Naive thymus-derived CD4-positive, alpha-beta T cell (primary cell): ENCODE measurements at regions of chr5 and their contacts with region 1.

Region 1: GRCh38 chr5:43484106-43484849 is 613 bp upstream of the TMEM267 start:
- DNase-seq: peak; percentile 69 to 91 (median 88)
- ATAC-seq: peak; percentile 83
- H3K4me3 ChIP-seq: peak overlapping the region; percentile 72
- H3K4me3 Mint-ChIP-seq: peak overlapping the region; percentile 95 to 100 (median 98)
- H3K27ac ChIP-seq: peak overlapping the region; percentile 92
- H3K27ac Mint-ChIP-seq: peak overlapping the region; percentile 97 to 100 (median 100)
- H3K4me1 ChIP-seq: peaks cover 20 to 28% of the 10 kb centered on the region in 2 donors
- H3K4me1 Mint-ChIP-seq: peaks cover 23 to 69% (median 60%) of the 10 kb centered on the region in 7 donors
- H3K27me3 ChIP-seq: no peaks in the 10 kb centered on the region
- H3K27me3 Mint-ChIP-seq: no peaks in the 10 kb centered on the region

Region 2: DNA sequence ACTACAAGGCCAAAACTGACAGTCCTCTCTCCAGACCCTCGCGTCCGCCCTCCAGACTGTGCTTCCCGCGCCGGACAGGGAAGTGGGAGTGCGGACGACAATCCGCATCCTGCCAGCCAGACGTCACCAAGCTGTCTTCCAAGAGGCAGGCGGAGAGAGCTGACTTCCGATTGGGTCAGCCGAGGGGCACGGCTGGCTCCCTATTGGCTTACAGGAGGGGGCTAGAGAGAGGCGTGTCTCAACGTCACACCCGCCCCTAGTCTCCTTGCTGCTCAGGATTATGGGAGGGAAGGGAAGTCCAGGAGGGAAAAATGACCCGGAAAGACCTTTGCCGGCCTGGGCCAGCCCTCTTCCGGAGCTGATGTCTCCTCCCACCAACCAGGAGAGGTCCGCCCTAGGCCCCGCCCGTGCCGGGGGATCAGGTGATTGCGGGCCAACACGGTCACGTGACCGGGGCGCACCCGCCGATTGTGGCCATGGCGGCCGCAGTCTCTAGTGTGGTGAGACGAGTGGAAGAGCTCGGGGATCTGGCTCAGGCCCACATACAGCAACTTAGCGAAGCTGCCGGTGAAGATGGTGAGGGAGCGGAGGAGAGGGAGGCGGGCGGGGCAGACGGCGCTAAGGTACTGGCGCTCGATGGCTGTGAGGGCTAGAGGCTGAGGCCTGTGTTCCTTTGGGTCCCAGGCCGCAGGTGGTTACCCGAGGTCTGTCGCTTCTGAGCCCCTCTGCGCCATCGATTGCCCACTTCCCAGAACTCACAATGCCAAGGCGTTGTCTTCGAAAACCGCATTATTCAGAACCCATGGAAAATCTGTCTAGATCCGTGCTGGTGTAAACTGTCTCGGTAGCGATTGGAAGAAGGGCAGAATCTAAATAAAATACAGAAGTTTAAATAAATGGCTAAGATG is 1580.1 kb before region 1 on chr5 and contains the start of gene RIMOC1:
- CTCF ChIA-PET with region 1: no interaction called
- POLR2A ChIA-PET with region 1: interaction called, 14 read pairs
- intact Hi-C with region 1: loop called in 1 of 2 experiments (anchors 1 kb)
- DNase-seq: peak; percentile 94 to 98 (median 97)
- ATAC-seq: peak; percentile 94
- H3K4me3 ChIP-seq: peak within 1 kb of the TSS; percentile 90
- H3K4me3 Mint-ChIP-seq: peak within 1 kb of the TSS; percentile 84 to 99 (median 98)
- H3K27ac ChIP-seq: peak within 1 kb of the TSS; percentile 85
- H3K27ac Mint-ChIP-seq: peak within 1 kb of the TSS; percentile 97 to 100 (median 99)
- H3K4me1 ChIP-seq: peaks cover 16 to 18% of the 10 kb centered on the region in 2 donors
- H3K4me1 Mint-ChIP-seq: peaks cover 21 to 54% (median 46%) of the 10 kb centered on the region in 7 donors
- H3K27me3 ChIP-seq: no peaks in the 10 kb centered on the region
- H3K27me3 Mint-ChIP-seq: peaks cover 0 to 11% (median 0%) of the 10 kb centered on the region in 5 donors
- total RNA-seq, gene RIMOC1: 13.8 to 40.6 (median 27.5) TPM

Region 3: GRCh38 chr5:42994246-42995151 is 489.8 kb before region 1 on chr5:
- CTCF ChIA-PET with region 1: interaction called, 4 read pairs
- POLR2A ChIA-PET with region 1: interaction called, 67 read pairs
- intact Hi-C with region 1: loop called in 1 of 2 experiments (anchors 2 kb)
- DNase-seq: peak; percentile 73 to 89 (median 85)
- ATAC-seq: peak; percentile 73
- H3K4me3 ChIP-seq: peak overlapping the region; percentile 84
- H3K4me3 Mint-ChIP-seq: peak overlapping the region; percentile 84 to 100 (median 98)
- H3K27ac ChIP-seq: peak overlapping the region; percentile 89
- H3K27ac Mint-ChIP-seq: peak overlapping the region; percentile 97 to 100 (median 100)
- H3K4me1 ChIP-seq: peaks cover 18 to 21% of the 10 kb centered on the region in 2 donors
- H3K4me1 Mint-ChIP-seq: peaks cover 16 to 49% (median 29%) of the 10 kb centered on the region in 7 donors
- H3K27me3 ChIP-seq: no peaks in the 10 kb centered on the region
- H3K27me3 Mint-ChIP-seq: peaks cover 0 to under 1% (median 0%) of the 10 kb centered on the region in 5 donors

Region 4: DNA sequence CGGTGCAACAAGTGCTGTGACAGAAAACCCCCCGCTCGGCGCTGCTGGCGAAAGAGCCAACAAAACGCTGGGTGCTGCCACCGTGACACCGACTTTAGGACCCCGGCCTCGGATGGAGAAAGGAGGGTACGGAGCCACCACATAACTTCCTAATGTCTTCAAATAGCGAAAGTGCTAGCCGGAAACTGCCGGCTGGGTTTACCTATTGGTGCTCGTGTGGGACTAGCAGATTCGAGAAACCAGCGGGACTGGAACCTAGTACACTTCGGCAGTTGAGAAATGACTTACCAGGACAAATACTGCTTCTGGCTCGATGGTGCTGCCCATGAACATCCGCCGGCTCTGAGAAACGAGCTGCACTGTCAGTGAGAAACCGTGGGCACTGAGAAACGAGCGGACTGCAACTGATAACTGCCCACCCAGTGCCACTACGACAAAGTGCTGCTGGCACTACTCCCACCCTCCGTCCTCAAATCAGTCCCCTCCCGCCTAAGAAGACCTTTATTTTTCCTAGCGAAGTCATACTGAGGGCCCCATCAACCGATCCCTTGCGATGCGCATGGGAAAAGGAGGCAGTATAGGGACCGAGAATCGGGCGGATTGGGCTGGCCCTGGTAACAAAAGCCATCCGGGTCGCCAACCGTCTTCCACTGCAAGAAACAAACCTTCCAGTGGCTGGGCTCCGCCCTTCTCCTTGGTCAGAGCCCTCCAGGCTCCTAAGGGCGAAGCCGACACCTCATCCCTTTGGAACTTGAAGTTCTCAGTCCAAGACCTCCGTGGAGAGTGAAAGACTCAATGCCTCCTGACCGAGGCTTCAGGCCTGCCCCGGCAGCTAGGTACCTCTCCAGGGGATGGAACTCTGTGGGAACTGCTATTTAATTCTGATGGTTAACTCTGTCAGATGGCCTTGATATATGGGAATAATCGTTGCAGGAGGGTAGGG is 417.2 kb before region 1 on chr5:
- CTCF ChIA-PET with region 1: no interaction called
- POLR2A ChIA-PET with region 1: interaction called, 93 read pairs
- intact Hi-C with region 1: loop called (anchors 1 kb)
- DNase-seq: peak; percentile 80 to 96 (median 89)
- ATAC-seq: peak; percentile 69
- H3K4me3 ChIP-seq: peak overlapping the region; percentile 82
- H3K4me3 Mint-ChIP-seq: peak overlapping the region; percentile 93 to 100 (median 98)
- H3K27ac ChIP-seq: peak overlapping the region; percentile 90
- H3K27ac Mint-ChIP-seq: peak overlapping the region; percentile 99 to 100 (median 99)
- H3K4me1 ChIP-seq: peaks cover 25 to 33% of the 10 kb centered on the region in 2 donors
- H3K4me1 Mint-ChIP-seq: peaks cover 26 to 67% (median 44%) of the 10 kb centered on the region in 7 donors
- H3K27me3 ChIP-seq: no peaks in the 10 kb centered on the region
- H3K27me3 Mint-ChIP-seq: no peaks in the 10 kb centered on the region

Region 5: GRCh38 chr5:43313035-43313853 is 171.0 kb before region 1 on chr5 and contains the start of gene HMGCS1:
- CTCF ChIA-PET with region 1: interaction called, 5 read pairs
- POLR2A ChIA-PET with region 1: interaction called, 82 read pairs
- intact Hi-C with region 1: loop called (anchors 1 kb)
- DNase-seq: peak; percentile 94 to 99 (median 99)
- ATAC-seq: peak; percentile 93
- H3K4me3 ChIP-seq: peak within 1 kb of the TSS; percentile 89
- H3K4me3 Mint-ChIP-seq: peak within 1 kb of the TSS; percentile 82 to 99 (median 94)
- H3K27ac ChIP-seq: peak within 1 kb of the TSS; percentile 95
- H3K27ac Mint-ChIP-seq: peak within 1 kb of the TSS; percentile 81 to 98 (median 94)
- H3K4me1 ChIP-seq: peaks cover 9 to 12% of the 10 kb centered on the region in 2 donors
- H3K4me1 Mint-ChIP-seq: peaks cover 19 to 63% (median 39%) of the 10 kb centered on the region in 7 donors
- H3K27me3 ChIP-seq: no peaks in the 10 kb centered on the region
- H3K27me3 Mint-ChIP-seq: peaks cover 0 to 2% (median 0%) of the 10 kb centered on the region in 5 donors
- total RNA-seq, gene HMGCS1: 32.2 to 77.5 (median 48.2) TPM

Region 6: DNA sequence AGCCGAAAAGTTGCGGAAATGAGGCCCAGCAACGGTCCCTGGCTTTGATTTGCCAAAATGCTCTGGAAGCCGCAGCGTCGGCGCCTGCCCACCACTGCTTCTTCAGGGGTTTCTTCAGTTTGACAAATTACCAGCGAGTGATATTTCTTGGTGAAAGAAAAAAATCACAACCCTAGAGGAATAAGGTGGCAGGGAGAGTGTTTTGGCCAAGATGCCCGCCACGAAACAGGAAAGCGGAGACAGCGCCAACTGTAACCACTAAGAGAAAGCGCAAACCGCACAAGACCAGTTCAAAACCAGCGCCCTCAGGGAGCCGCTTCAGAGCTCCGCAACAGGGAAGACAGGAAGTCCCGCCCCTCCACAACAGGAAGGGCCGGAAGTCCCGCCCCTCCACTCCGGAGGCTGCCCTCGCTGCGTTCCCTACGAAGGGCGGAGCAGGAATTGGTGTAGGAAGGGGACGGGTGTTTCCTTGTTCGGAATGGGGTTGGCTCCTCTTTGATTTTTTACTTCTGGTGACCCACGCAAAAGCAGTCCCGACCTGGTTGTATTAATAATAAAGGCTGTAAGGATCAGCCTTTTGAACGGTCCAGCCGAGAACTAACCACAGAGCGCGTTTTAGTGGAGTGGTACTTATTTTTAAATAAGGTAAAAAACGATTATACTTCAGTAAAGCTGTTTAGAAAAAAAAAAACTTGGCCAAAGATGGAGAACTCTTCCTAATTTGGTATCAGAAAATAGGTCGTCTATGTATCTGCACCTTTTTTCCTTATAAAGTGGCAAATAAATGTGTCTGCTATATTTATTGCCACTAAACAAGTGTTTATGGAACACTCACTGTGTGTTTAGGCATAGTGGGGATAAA is 30.8 kb after region 1 on chr5 and contains the start of gene C5orf34:
- CTCF ChIA-PET with region 1: interaction called, 10 read pairs
- POLR2A ChIA-PET with region 1: interaction called, 81 read pairs
- intact Hi-C with region 1: loop called (anchors 1 kb)
- DNase-seq: peak; percentile 84 to 94 (median 89)
- ATAC-seq: peak; percentile 97
- H3K4me3 ChIP-seq: peak within 1 kb of the TSS; percentile 84
- H3K4me3 Mint-ChIP-seq: peak within 1 kb of the TSS; percentile 90 to 97 (median 94)
- H3K27ac ChIP-seq: peak within 1 kb of the TSS; percentile 81
- H3K27ac Mint-ChIP-seq: peak within 1 kb of the TSS; percentile 90 to 98 (median 95)
- H3K4me1 ChIP-seq: peaks cover 8 to 14% of the 10 kb centered on the region in 2 donors
- H3K4me1 Mint-ChIP-seq: peaks cover 17 to 42% (median 36%) of the 10 kb centered on the region in 7 donors
- H3K27me3 ChIP-seq: no peaks in the 10 kb centered on the region
- H3K27me3 Mint-ChIP-seq: no peaks in the 10 kb centered on the region
- total RNA-seq, gene C5orf34: 1.1 to 5.2 (median 3.3) TPM

Region 7: DNA sequence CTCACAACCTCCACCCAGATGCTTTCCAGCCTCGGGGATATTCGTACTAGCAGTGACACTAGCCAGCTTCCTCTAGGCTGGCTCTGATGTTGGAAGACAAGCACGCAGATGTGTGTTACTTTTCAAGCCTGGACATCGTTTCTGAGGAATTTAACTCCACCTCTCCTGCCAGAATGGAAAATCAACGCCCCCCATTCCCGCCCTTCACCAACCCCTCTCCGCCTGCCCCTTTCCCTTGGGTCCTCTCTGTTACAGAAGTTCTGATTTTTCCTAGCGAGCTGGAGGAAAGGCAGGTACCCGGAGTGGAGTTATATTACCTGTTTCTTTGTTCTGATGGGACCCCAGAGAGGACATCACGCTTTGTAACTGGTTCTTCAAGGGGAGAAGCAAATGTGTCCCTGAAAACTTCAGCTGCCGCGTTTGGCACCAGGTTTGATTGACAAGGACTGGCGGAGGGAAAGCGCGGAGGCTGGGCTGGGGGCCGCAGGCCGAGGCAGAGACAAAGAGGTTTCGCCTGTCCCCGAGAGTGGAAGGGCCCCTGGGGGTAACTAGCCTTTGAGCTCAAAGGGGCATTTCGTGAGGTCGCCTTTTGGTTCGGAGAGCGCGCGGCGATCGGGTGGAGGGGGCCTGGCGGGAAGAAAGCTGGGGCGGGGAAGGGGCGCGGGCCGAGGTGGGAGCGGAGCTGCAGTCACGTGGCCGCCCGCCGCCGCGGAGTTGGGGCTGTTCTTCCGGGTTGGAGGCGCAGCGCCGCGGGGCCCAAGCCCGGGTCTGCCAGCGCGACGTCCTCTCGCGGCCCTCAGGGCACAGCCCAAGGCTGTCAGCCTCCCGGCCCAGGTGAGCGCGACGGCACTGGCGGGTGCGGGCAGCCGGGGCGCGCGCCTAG is 118.4 kb after region 1 on chr5 and contains the start of gene NNT:
- CTCF ChIA-PET with region 1: interaction called, 9 read pairs
- POLR2A ChIA-PET with region 1: interaction called, 73 read pairs
- intact Hi-C with region 1: loop called (anchors 1 kb)
- DNase-seq: peak; percentile 71 to 85 (median 78)
- ATAC-seq: peak; percentile 85
- H3K4me3 ChIP-seq: peak within 1 kb of the TSS; percentile 78
- H3K4me3 Mint-ChIP-seq: peak within 1 kb of the TSS; percentile 90 to 99 (median 94)
- H3K27ac ChIP-seq: peak within 1 kb of the TSS; percentile 87
- H3K27ac Mint-ChIP-seq: peak within 1 kb of the TSS; percentile 86 to 98 (median 93)
- H3K4me1 ChIP-seq: peaks cover 6 to 14% of the 10 kb centered on the region in 2 donors
- H3K4me1 Mint-ChIP-seq: peaks cover 26 to 72% (median 60%) of the 10 kb centered on the region in 7 donors
- H3K27me3 ChIP-seq: no peaks in the 10 kb centered on the region
- H3K27me3 Mint-ChIP-seq: no peaks in the 10 kb centered on the region
- total RNA-seq, gene NNT: 42.5 to 73.5 (median 60.7) TPM